ENCODE measurements at regions of chr7 and their contacts with region 1.

Region 1: GRCh38 chr7:143434660-143435059 is 8.6 kb upstream of the TAS2R60 start:
- DNase-seq: no peak
- H3K4me3 ChIP-seq: no peak overlapping the region
- H3K27ac ChIP-seq: no peak overlapping the region
- H3K4me1 ChIP-seq: no peaks in the 10 kb centered on the region
- H3K27me3 ChIP-seq: no peaks in the 10 kb centered on the region
- CTCF ChIP-seq: no peak
- EP300 ChIP-seq: no peak
- POLR2A ChIP-seq: no peak

Region 2: DNA sequence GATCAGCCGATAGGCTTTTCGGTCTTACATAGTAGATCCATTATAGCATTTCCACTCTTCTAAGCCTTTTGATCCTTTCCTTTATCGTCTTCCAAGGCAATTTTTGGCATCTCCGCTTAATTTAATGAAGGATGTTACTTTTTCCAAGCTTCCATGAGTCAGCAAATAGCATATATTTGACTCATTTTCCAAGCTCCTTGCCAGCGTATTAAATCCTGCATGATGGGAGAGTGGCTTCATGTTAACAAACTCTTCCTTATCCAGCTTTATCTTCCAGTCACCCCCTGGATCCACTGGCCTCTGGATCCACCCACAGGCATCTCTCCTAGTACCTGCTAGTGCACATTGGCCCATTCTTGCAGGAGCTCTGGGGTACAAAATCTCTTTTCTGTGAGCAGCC is 420.8 kb before region 1 on chr7:
- intact Hi-C with region 1: loop called (anchors 10 kb)
- DNase-seq: no peak
- H3K4me3 ChIP-seq: no peak overlapping the region
- H3K27ac ChIP-seq: peak overlapping the region; percentile 13 to 67 (median 47)
- H3K4me1 ChIP-seq: peaks cover 0 to 20% (median 18%) of the 10 kb centered on the region in 4 donors
- H3K27me3 ChIP-seq: no peaks in the 10 kb centered on the region
- CTCF ChIP-seq: no peak
- EP300 ChIP-seq: no peak
- POLR2A ChIP-seq: no peak

Region 3: DNA sequence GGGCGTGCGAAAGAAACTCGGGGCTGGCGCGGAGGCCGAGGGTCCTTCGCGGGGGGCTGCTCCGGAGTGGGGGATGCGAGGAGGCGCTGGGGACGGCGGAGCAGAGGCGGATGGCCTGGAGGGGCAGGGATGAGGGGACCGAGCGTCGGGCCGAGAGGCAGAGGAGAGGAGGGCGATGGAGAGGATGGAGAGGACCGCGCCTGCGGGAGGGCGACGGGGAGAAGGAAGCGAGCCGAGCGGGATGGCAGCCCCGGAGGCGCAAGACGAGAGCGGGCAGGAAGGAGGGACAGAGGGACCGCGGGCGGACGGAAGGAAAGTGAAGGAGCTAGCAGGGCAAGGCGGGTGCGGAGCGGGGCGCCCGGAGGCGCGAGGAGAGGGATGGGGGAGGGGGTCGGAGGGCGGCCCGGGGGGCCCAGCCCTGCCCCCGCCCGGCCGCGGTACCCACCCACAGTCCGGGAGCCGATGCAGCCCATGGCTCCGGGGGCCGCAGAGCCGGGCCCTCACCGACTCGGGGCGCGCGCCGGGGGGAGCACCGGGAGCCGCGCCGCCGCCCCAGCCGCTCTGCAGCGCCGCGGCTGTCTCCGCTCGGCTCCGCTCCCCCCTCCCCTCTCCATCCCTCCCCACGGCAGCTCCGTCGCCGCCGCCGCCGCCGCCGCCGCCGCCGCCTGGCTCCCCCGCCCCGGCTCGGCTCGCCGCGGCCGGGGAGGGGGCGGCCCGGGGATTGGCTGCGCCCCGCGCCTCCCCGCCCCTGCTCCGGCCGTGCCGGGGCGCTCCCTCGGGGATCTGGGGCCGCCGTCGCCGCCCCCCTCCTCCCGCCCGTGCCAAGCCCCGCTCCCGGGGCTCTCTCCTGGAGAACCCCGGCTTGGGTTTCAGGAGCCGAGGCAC is 72.3 kb before region 1 on chr7 and contains the start of gene FAM131B:
- intact Hi-C with region 1: no loop called
- DNase-seq: peak; percentile 67
- H3K4me3 ChIP-seq: peak within 1 kb of the TSS; percentile 53 to 86 (median 74)
- H3K27ac ChIP-seq: peak within 1 kb of the TSS in 3 of 4 donors; percentile 60 to 71 (median 66)
- H3K4me1 ChIP-seq: peaks cover 0 to 23% (median 17%) of the 10 kb centered on the region in 4 donors
- H3K27me3 ChIP-seq: peaks cover 0 to 16% (median 3%) of the 10 kb centered on the region in 3 donors
- CTCF ChIP-seq: no peak
- EP300 ChIP-seq: no peak
- POLR2A ChIP-seq: no peak
- total RNA-seq, gene FAM131B: 6.4 to 15.7 (median 6.8) TPM